Endothelial cell of umbilical vein (primary cell): ENCODE measurements at regions of chr20 and their contacts with region 1.

Region 1: DNA sequence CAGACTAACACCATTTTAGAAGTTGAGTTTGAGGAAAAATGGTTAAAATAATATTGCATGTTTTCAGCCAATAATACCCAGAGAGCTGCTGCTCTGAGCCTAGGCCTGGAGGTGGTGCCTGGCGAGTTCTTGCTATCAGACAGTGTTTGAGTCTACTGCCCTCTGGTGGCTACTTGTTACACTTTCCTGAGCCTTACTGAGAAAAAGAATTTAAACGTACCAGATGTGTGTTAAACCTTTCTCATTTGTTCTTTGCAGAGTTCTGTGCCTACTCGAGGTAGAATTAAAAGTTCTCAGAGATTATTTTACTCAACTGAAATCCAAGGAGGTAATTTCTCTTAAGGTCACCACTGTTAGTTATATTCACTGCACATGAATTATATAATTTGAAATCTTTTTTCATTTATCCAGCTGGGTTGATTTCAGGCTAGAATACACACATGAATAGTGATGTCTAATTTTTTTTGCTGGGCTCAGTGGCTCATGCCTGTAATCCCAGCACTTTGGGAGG is 38.2 kb downstream of the SHLD1 start:
- DNase-seq: peak; percentile 82
- H3K4me3 ChIP-seq: no peak overlapping the region
- H3K27ac ChIP-seq: no peak overlapping the region
- H3K4me1 ChIP-seq: peaks cover 6% of the 10 kb centered on the region
- H3K27me3 ChIP-seq: no peaks in the 10 kb centered on the region
- CTCF ChIP-seq: peak; percentile 72 to 73
- POLR2A ChIP-seq: no peak

Region 2: GRCh38 chr20:5529331-5530148 is 258.9 kb before region 1 on chr20:
- CTCF ChIA-PET with region 1: interaction called, 139 read pairs
- POLR2A ChIA-PET with region 1: no interaction called
- dilution Hi-C with region 1: no loop called
- intact Hi-C with region 1: loop called (anchors 1 kb)
- DNase-seq: peak; percentile 71
- H3K4me3 ChIP-seq: no peak overlapping the region
- H3K27ac ChIP-seq: no peak overlapping the region
- H3K4me1 ChIP-seq: no peaks in the 10 kb centered on the region
- H3K27me3 ChIP-seq: peaks cover 0 to 5% of the 10 kb centered on the region in 2 experiments
- CTCF ChIP-seq: peak; percentile 91 to 94
- POLR2A ChIP-seq: no peak

Region 3: GRCh38 chr20:5569021-5569420 is 219.4 kb before region 1 on chr20:
- CTCF ChIA-PET with region 1: interaction called, 294 read pairs
- POLR2A ChIA-PET with region 1: no interaction called
- dilution Hi-C with region 1: no loop called
- intact Hi-C with region 1: loop called (anchors 1 kb)
- DNase-seq: peak; percentile 74
- H3K4me3 ChIP-seq: no peak overlapping the region
- H3K27ac ChIP-seq: no peak overlapping the region
- H3K4me1 ChIP-seq: peaks cover 8% of the 10 kb centered on the region
- H3K27me3 ChIP-seq: no peaks in the 10 kb centered on the region
- CTCF ChIP-seq: peak; percentile 31 to 39
- POLR2A ChIP-seq: no peak

Region 4: GRCh38 chr20:5642155-5642981 is 146.1 kb before region 1 on chr20:
- CTCF ChIA-PET with region 1: interaction called, 17 read pairs
- POLR2A ChIA-PET with region 1: no interaction called
- dilution Hi-C with region 1: no loop called
- intact Hi-C with region 1: no loop called
- DNase-seq: peak; percentile 80
- H3K4me3 ChIP-seq: no peak overlapping the region
- H3K27ac ChIP-seq: peak overlapping the region; percentile 66
- H3K4me1 ChIP-seq: peaks cover 31% of the 10 kb centered on the region
- H3K27me3 ChIP-seq: no peaks in the 10 kb centered on the region
- CTCF ChIP-seq: no peak
- POLR2A ChIP-seq: no peak

Region 5: GRCh38 chr20:5731753-5732366 is 56.6 kb before region 1 on chr20:
- CTCF ChIA-PET with region 1: no interaction called
- POLR2A ChIA-PET with region 1: no interaction called
- dilution Hi-C with region 1: no loop called
- intact Hi-C with region 1: no loop called
- DNase-seq: no peak
- H3K4me3 ChIP-seq: no peak overlapping the region
- H3K27ac ChIP-seq: no peak overlapping the region
- H3K4me1 ChIP-seq: no peaks in the 10 kb centered on the region
- H3K27me3 ChIP-seq: peaks cover 20 to 23% of the 10 kb centered on the region in 2 experiments
- CTCF ChIP-seq: no peak
- POLR2A ChIP-seq: no peak

Region 6: GRCh38 chr20:5749952-5750779 is 38.3 kb before region 1 on chr20 and contains the start of gene SHLD1:
- CTCF ChIA-PET with region 1: interaction called, 19 read pairs
- POLR2A ChIA-PET with region 1: no interaction called
- dilution Hi-C with region 1: no loop called
- intact Hi-C with region 1: no loop called
- DNase-seq: peak; percentile 75
- H3K4me3 ChIP-seq: peak within 1 kb of the TSS; percentile 37 to 85 (median 76)
- H3K27ac ChIP-seq: peak within 1 kb of the TSS; percentile 57
- H3K4me1 ChIP-seq: no peaks in the 10 kb centered on the region
- H3K27me3 ChIP-seq: no peaks in the 10 kb centered on the region
- CTCF ChIP-seq: no peak
- POLR2A ChIP-seq: no peak
- total RNA-seq, gene SHLD1: 4.7 and 5.1 TPM in 2 replicates

Region 7: GRCh38 chr20:6074145-6074561 is 285.7 kb after region 1 on chr20:
- CTCF ChIA-PET with region 1: interaction called, 9 read pairs
- POLR2A ChIA-PET with region 1: no interaction called
- dilution Hi-C with region 1: no loop called
- intact Hi-C with region 1: loop called (anchors 5 kb)
- DNase-seq: no peak
- H3K4me3 ChIP-seq: no peak overlapping the region
- H3K27ac ChIP-seq: no peak overlapping the region
- H3K4me1 ChIP-seq: no peaks in the 10 kb centered on the region
- H3K27me3 ChIP-seq: no peaks in the 10 kb centered on the region
- CTCF ChIP-seq: peak; percentile 14 to 18
- POLR2A ChIP-seq: no peak